Dendritic cell treated with granulocyte-macrophage colony-stimulating factor and Interleukin-4, amounts not matched to agents 40 ng/mL and 50 ng/mL, for 4 days (primary cell): ENCODE measurements at regions of chr7 and their contacts with region 1.

Region 1: DNA sequence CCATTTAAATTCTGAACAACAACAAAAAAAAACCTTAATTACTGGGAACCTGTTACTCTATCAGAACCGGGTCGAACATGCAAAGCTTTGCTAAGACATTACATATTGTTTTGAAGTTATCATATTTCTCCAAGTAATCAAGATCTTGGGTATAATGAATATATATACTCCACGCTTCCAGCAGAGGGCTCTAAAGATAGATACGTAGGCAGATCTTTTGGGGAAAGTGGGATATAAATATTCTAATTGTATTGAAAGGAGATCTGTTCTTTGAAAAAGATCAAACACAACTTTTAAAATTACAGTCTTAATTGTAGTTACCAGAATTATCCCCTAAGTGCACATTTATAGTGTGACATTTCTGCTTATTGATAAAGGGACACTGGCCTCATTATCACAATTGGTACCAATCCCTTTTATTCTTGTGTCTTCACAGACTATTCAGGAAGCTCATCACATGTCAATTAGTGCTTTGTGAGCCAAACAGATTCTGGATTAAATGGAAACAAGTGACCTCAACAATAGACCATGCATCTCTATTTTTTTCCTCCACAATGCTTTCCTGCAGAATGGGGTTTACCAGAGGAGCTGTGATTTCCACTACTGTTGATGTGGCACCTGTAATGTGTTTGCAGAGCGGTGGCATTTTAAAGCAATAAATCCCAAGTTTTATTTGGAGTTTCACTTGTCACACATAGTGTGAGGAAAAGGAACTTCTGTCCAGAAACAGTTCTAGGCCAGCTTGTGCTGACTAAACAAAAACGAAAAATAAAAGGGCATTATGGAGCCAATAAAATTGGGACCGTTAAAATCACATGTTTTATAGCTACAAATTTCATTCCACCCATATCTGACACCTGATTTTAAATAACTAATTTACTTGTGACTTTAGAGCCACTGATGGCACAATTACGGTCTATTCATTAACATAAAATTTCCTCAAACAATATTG is 122.4 kb downstream of the CTTNBP2 start:
- H3K4me3 Mint-ChIP-seq: no peak overlapping the region
- H3K27ac Mint-ChIP-seq: peak overlapping the region; percentile 77
- H3K4me1 Mint-ChIP-seq: peaks cover 47% of the 10 kb centered on the region
- H3K27me3 Mint-ChIP-seq: peaks cover 1% of the 10 kb centered on the region

Region 2: GRCh38 chr7:117728890-117729624 is 21.8 kb before region 1 on chr7:
- intact Hi-C with region 1: no loop called
- H3K4me3 Mint-ChIP-seq: peak overlapping the region; percentile 2
- H3K27ac Mint-ChIP-seq: peak overlapping the region; percentile 83
- H3K4me1 Mint-ChIP-seq: peaks cover 40% of the 10 kb centered on the region
- H3K27me3 Mint-ChIP-seq: peaks cover 4% of the 10 kb centered on the region

Region 3: GRCh38 chr7:117772421-117772820 is 21.5 kb after region 1 on chr7:
- intact Hi-C with region 1: loop called (anchors 2 kb)
- H3K4me3 Mint-ChIP-seq: no peak overlapping the region
- H3K27ac Mint-ChIP-seq: peak overlapping the region; percentile 91
- H3K4me1 Mint-ChIP-seq: peaks cover 69% of the 10 kb centered on the region
- H3K27me3 Mint-ChIP-seq: no peaks in the 10 kb centered on the region

Region 4: DNA sequence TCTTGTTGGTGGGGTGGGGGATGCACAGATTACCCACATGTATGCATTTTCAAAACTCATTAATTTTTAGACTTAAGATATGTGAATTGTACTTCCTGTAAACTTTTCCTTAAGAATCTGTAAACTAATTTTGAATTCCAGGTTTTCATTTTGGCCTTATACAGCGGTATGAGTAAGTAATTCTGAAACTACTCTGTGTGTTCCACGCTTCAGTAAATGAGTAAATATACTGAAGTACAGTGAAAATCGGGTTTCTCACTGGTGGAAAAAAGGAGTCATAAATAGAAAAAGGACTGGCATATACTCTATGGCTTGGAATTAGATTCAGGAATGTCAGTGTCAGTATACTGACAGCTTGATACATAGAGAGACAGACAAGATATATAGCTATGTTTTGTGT is 49.5 kb after region 1 on chr7:
- intact Hi-C with region 1: loop called (anchors 5 kb)
- H3K4me3 Mint-ChIP-seq: no peak overlapping the region
- H3K27ac Mint-ChIP-seq: no peak overlapping the region
- H3K4me1 Mint-ChIP-seq: peaks cover 26% of the 10 kb centered on the region
- H3K27me3 Mint-ChIP-seq: peaks cover 4% of the 10 kb centered on the region

Region 5: GRCh38 chr7:117949232-117949631 is 198.3 kb after region 1 on chr7:
- intact Hi-C with region 1: no loop called
- H3K4me3 Mint-ChIP-seq: no peak overlapping the region
- H3K27ac Mint-ChIP-seq: no peak overlapping the region
- H3K4me1 Mint-ChIP-seq: no peaks in the 10 kb centered on the region
- H3K27me3 Mint-ChIP-seq: no peaks in the 10 kb centered on the region

Region 6: DNA sequence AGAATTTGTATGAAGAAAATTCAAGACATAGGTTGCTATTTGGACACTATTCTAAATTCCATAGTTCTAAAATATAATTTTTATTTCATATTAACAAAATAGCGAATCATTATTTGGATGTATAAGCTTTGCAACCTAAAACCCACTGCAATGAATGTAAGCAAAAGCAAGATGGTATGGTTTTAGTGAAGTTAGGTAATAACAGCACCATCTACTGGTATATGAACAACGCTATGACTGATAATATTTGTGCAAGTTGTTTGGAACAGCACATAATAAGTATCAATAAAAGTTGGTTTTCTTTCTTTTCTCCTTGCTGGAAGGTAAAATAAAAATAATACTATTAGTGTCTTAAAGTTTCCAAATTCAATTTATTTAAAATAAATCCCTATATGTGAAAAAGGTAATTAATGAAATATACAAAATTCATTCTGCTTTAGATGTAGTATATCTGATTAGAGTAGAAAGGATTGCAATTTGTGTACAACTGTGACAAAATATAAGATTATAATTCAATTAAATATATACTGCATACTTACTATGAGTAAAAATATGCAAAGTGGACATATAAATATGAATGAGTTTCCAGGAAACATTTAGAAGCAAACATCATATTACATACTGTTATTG is 354.0 kb after region 1 on chr7:
- intact Hi-C with region 1: loop called (anchors 5 kb)
- H3K4me3 Mint-ChIP-seq: no peak overlapping the region
- H3K27ac Mint-ChIP-seq: no peak overlapping the region
- H3K4me1 Mint-ChIP-seq: no peaks in the 10 kb centered on the region
- H3K27me3 Mint-ChIP-seq: no peaks in the 10 kb centered on the region